ENCODE measurements at regions of chr9 and their contacts with region 1.

Region 1: DNA sequence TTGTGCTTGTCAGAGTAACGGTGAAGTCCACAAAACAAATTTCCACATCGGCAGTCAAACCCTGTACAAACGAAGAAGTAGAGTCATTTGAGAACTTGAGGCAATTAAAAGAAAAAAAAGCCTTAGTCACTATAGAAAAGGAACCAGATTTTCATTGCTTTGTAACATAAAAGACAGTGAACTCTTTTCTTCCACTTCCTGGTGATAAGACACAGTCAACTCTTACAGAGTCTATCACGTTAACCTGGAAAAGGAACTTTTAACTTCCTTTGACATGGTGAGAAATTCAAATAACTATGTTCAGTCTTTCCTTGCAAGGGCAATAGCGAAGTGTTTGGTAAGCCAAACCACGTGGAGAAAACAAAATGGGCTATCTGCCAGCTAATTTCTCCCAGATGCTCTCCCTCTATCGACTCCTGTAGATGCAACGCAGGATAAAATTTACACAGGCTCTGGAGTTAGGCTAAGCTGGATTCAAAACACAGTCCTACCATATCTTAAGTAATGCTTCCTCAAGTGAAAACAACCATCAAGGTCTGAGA is 8.9 kb downstream of the ZFAND5 start:
- DNase-seq: no peak
- H3K4me3 Mint-ChIP-seq: no peak overlapping the region
- H3K27ac Mint-ChIP-seq: no peak overlapping the region
- H3K4me1 Mint-ChIP-seq: peaks cover 14% of the 10 kb centered on the region
- H3K27me3 Mint-ChIP-seq: no peaks in the 10 kb centered on the region
- CTCF ChIP-seq: no peak

Region 2: DNA sequence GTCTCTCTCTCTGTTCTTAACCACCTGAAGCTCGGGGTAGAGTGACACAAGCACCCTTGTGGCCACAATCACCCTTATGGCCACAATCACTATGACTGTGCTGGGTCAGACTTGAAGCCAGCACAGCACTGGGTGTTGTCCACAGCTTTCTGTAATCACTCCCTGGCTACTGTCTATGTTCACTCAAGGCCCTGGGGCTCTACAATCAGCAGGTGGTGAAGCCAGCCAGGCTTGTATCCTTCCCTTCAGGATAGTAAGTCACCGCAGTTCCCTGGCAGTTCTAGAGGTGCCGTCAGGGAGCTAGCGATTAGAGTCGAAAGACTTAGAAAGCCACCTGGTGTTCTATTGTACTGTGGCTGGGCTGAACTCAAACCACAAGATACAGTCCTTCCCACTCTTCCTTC is 162.6 kb before region 1 on chr9:
- CTCF ChIA-PET with region 1: no interaction called
- POLR2A ChIA-PET with region 1: no interaction called
- intact Hi-C with region 1: loop called (anchors 5 kb)
- DNase-seq: no peak
- H3K4me3 Mint-ChIP-seq: no peak overlapping the region
- H3K27ac Mint-ChIP-seq: no peak overlapping the region
- H3K4me1 Mint-ChIP-seq: no peaks in the 10 kb centered on the region
- H3K27me3 Mint-ChIP-seq: no peaks in the 10 kb centered on the region
- CTCF ChIP-seq: no peak

Region 3: GRCh38 chr9:72599879-72600534 is 243.9 kb after region 1 on chr9:
- CTCF ChIA-PET with region 1: no interaction called
- POLR2A ChIA-PET with region 1: no interaction called
- intact Hi-C with region 1: no loop called
- DNase-seq: no peak
- H3K4me3 Mint-ChIP-seq: no peak overlapping the region
- H3K27ac Mint-ChIP-seq: no peak overlapping the region
- H3K4me1 Mint-ChIP-seq: peaks cover 7% of the 10 kb centered on the region
- H3K27me3 Mint-ChIP-seq: no peaks in the 10 kb centered on the region
- CTCF ChIP-seq: no peak

Measured in MCF 10A (cell line).